Calu3 (cell line): ENCODE measurements at regions of chr1 and their contacts with region 1.

Region 1: GRCh38 chr1:208223136-208223535 is 21.0 kb downstream of the PLXNA2 start:
- DNase-seq: no peak
- H3K4me3 Mint-ChIP-seq: no peak overlapping the region
- H3K27ac Mint-ChIP-seq: no peak overlapping the region
- H3K4me1 Mint-ChIP-seq: peaks cover 34% of the 10 kb centered on the region
- H3K27me3 Mint-ChIP-seq: no peaks in the 10 kb centered on the region
- CTCF ChIP-seq: no peak

Region 2: DNA sequence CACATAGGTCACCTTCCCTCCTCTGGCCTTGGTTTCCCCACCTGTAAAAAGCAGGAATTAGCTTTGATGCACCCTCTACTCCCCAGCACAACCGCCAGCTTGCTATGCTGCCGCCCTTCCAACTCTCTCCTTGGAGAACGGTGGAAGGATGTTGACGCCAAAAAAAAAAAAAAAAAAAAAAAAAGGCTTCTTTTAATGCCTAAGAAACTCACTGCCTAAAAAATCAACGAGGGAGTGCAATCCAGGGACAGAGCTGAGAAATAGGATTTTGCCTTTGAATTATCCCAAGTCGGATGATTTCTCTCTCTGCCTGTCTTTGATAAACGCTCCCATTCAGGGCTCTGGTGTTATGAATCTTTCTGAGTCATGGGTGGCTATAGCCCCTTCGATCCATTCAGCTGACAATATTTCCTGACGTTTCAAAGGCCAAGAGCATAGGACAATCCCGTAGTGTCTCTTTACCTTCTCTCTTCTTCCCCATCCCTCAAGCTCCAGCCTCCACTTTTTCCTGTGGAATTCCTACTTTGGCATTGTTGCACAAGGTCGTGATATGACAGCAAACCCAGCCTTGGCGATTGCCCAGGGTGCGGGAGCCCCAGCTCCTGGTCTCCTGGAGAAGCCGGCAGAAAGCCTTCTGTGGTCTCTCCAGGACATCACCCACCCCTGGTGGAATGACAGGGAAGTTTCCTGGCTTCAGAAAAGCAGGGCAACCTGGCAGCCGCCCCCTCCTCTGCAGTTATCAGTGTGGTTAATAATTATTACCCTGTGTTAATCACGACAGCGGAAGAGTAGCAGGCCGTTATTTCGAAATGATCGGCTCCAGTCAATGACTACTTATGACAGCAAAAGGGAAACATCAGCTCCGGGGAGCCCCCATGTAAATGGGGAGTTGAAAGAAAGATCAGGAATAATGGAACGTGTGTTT is 29.0 kb after region 1 on chr1:
- CTCF ChIA-PET with region 1: interaction called, 10 read pairs
- intact Hi-C with region 1: no loop called
- DNase-seq: peak; percentile 91
- H3K4me3 Mint-ChIP-seq: peak overlapping the region; percentile 57
- H3K27ac Mint-ChIP-seq: no peak overlapping the region
- H3K4me1 Mint-ChIP-seq: peaks cover 19% of the 10 kb centered on the region
- H3K27me3 Mint-ChIP-seq: peaks cover 80% of the 10 kb centered on the region
- CTCF ChIP-seq: peak; percentile 87